Naive thymus-derived CD4-positive, alpha-beta T cell (primary cell): ENCODE measurements at regions of chr10 and their contacts with region 1.

Region 1: DNA sequence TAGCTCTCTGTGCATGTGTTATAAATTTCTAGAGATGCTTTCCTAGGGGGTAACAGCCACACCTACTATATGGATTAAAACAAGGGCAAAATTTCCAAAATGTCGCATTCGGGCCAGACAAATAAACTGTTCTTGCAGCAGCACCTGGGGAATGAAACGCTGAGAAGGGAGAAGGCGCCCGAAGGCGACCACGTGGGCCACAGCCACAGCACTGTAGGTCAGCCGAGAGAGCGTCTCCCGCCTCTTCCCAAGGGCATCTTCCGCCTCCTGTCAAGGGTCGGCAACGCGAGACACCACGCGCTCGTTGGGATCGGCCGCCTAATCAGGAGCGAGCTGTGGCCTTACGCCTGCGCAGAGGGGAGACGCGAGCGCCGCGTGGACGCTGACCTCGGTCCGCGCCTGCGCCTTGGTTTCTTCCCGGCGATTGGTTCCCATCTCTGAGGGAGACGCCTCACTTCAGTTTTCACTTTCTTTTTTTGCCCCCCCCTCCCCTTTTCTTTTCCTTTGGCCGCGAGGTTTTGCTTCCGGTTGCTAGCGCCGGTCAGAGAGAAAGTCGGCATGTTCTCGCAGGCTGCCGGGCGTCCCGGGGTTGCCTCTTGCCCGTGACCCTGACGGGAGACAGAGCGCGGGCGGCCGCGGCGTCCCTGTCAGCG is at the start of gene TASOR2:
- DNase-seq: peak; percentile 91 to 96 (median 93)
- ATAC-seq: peak; percentile 92
- H3K4me3 ChIP-seq: peak within 1 kb of the TSS; percentile 76
- H3K4me3 Mint-ChIP-seq: peak within 1 kb of the TSS; percentile 93 to 100 (median 98)
- H3K27ac ChIP-seq: peak within 1 kb of the TSS; percentile 96
- H3K27ac Mint-ChIP-seq: peak within 1 kb of the TSS; percentile 90 to 99 (median 98)
- H3K4me1 ChIP-seq: peaks cover 15 to 24% of the 10 kb centered on the region in 2 donors
- H3K4me1 Mint-ChIP-seq: peaks cover 31 to 55% (median 44%) of the 10 kb centered on the region in 7 donors
- H3K27me3 ChIP-seq: no peaks in the 10 kb centered on the region
- H3K27me3 Mint-ChIP-seq: peaks cover 0 to 12% (median under 1%) of the 10 kb centered on the region in 5 donors
- total RNA-seq, gene TASOR2: 55.0 to 86.5 (median 62.1) TPM

Region 2: GRCh38 chr10:5446390-5446926 is 238.0 kb before region 1 on chr10:
- CTCF ChIA-PET with region 1: interaction called, 3 read pairs
- POLR2A ChIA-PET with region 1: interaction called, 3 read pairs
- intact Hi-C with region 1: loop called in 1 of 2 experiments (anchors 2 kb)
- DNase-seq: peak; percentile 77 to 88 (median 86)
- ATAC-seq: peak; percentile 93
- H3K4me3 ChIP-seq: peak overlapping the region; percentile 79
- H3K4me3 Mint-ChIP-seq: peak overlapping the region; percentile 92 to 100 (median 96)
- H3K27ac ChIP-seq: peak overlapping the region; percentile 78
- H3K27ac Mint-ChIP-seq: peak overlapping the region; percentile 82 to 97 (median 92)
- H3K4me1 ChIP-seq: peaks cover 0 to 24% of the 10 kb centered on the region in 2 donors
- H3K4me1 Mint-ChIP-seq: peaks cover 16 to 78% (median 62%) of the 10 kb centered on the region in 7 donors
- H3K27me3 ChIP-seq: no peaks in the 10 kb centered on the region
- H3K27me3 Mint-ChIP-seq: no peaks in the 10 kb centered on the region

Region 3: DNA sequence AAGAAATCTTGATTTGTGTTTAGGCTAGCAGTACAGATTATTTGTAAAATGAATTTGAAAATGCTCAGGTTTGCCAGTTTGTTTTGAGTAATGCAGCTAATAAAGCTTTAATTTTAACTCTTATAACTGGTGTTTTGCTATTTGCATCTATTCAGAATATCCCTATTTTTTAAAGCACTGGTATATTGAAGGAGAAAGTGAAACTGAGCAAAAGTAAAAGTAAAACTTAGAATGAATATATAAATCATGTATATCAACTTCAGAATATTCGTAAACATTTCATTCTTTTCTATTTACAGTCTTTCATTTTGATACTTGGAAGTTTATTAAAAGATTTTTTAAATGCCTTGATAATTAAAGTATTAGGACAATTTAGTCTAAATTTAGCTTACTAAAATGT is 26.4 kb after region 1 on chr10:
- CTCF ChIA-PET with region 1: no interaction called
- POLR2A ChIA-PET with region 1: interaction called, 7 read pairs
- intact Hi-C with region 1: loop called (anchors 1 kb)
- DNase-seq: peak in 1 of 9 donors; percentile 7
- ATAC-seq: no peak
- H3K4me3 ChIP-seq: peak overlapping the region; percentile 32
- H3K4me3 Mint-ChIP-seq: peak overlapping the region; percentile 16 to 84 (median 70)
- H3K27ac ChIP-seq: peak overlapping the region; percentile 20
- H3K27ac Mint-ChIP-seq: peak overlapping the region in 4 of 9 donors; percentile 68 to 89 (median 82)
- H3K4me1 ChIP-seq: peaks cover 11 to 20% of the 10 kb centered on the region in 2 donors
- H3K4me1 Mint-ChIP-seq: peaks cover 31 to 91% (median 79%) of the 10 kb centered on the region in 7 donors
- H3K27me3 ChIP-seq: no peaks in the 10 kb centered on the region
- H3K27me3 Mint-ChIP-seq: no peaks in the 10 kb centered on the region

Region 4: DNA sequence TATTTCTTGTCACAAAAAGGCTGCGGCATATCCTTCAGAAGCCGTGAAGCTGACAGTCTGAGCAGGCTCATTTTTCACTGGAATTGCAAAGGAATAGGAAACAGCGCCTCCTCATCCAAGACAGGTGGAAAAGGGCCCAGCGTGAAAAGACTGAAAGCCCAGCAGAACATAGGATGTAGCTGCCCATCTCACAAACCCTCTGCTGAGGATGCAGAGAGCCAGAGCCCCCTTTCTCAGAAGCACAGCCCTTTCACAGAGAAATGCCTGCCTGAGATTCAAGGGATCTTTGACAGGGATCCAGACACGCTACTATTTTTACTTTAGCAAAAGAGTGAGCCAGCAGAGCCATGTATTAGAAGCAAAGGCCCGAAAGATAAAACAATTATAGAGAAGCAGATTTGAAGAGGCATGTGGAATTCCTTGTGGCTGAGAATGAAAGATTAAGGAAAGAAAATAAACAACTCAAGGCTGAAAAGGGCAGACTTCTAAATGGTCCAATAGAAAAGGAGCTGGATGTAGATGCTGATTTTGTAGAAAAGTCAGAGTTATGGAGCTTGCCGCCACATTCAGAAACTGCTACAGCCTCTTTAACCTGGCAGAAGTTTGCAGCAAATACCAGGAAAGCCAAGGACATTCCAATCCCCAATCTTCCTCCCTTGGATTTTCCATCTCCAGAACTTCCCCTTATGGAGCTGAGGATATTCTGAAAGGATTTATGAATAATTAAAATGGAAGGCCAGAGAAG is 91.9 kb after region 1 on chr10:
- CTCF ChIA-PET with region 1: no interaction called
- POLR2A ChIA-PET with region 1: no interaction called
- intact Hi-C with region 1: loop called (anchors 1 to 2 kb)
- DNase-seq: no peak
- ATAC-seq: peak; percentile 5
- H3K4me3 ChIP-seq: peak overlapping the region; percentile 32
- H3K4me3 Mint-ChIP-seq: peak overlapping the region; percentile 59 to 82 (median 76)
- H3K27ac ChIP-seq: peak overlapping the region; percentile 72
- H3K27ac Mint-ChIP-seq: peak overlapping the region; percentile 83 to 95 (median 94)
- H3K4me1 ChIP-seq: peaks cover 15 to 24% of the 10 kb centered on the region in 2 donors
- H3K4me1 Mint-ChIP-seq: peaks cover 23 to 75% (median 62%) of the 10 kb centered on the region in 7 donors
- H3K27me3 ChIP-seq: no peaks in the 10 kb centered on the region
- H3K27me3 Mint-ChIP-seq: no peaks in the 10 kb centered on the region

Region 5: DNA sequence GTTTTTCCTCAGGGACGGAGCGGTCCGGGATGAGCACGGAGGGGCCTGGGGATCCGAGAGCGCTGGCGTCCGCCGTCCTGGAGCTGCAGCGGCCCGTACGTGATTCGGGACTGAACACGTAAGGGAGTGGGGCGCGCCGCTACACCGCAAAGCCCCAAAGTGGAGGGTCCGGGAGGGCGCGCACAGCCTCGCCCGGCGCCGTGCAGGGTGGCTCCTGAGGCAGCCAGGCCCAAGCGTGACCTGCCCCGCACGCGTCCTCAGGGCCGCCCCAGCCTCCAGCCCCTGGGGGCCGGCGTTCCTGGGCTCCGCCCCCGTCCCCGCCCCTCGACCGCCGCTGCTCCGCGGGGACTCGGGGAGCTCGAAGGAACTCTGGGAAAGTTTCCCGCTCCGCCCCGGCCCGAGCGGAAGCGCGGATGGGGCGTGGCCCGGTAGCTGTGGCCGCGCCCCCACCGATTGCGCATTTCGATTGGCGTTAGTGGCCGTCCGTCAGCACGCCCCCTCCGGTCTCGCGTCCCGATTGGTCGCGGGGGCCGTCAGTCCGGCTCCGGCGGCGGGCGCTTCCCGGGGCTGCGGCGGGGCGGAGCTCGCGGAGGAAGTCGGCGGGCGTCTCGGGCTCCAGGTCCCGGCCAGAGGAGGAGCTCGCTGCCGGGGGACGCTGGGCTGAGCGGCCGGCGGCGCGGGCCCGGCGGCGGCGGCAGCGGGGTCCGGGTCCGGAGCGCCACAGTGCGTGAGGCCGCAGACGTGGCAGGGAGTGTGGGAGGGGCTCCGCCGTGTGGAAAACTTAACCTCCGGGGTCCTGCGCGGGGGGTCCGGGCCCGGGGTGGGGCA is 205.4 kb after region 1 on chr10 and contains the starts of genes ANKRD16 and FBH1:
- CTCF ChIA-PET with region 1: interaction called, 3 read pairs
- POLR2A ChIA-PET with region 1: interaction called, 6 read pairs
- intact Hi-C with region 1: loop called (anchors 1 to 2 kb)
- DNase-seq: peak; percentile 94 to 100 (median 96)
- ATAC-seq: peak; percentile 96
- H3K4me3 ChIP-seq: peak within 1 kb of the TSS; percentile 70
- H3K4me3 Mint-ChIP-seq: peak within 1 kb of the TSS; percentile 90 to 97 (median 94)
- H3K27ac ChIP-seq: peak within 1 kb of the TSS; percentile 81
- H3K27ac Mint-ChIP-seq: peak within 1 kb of the TSS; percentile 80 to 94 (median 87)
- H3K4me1 ChIP-seq: peaks cover 12% of the 10 kb centered on the region in 2 donors
- H3K4me1 Mint-ChIP-seq: peaks cover 34 to 64% (median 60%) of the 10 kb centered on the region in 7 donors
- H3K27me3 ChIP-seq: no peaks in the 10 kb centered on the region
- H3K27me3 Mint-ChIP-seq: no peaks in the 10 kb centered on the region
- total RNA-seq, gene ANKRD16: 4.6 to 9.8 (median 7.2) TPM
- total RNA-seq, gene FBH1: 64.8 to 105 (median 78.6) TPM

Region 6: GRCh38 chr10:7337431-7338171 is 1653.2 kb after region 1 on chr10:
- CTCF ChIA-PET with region 1: no interaction called
- POLR2A ChIA-PET with region 1: no interaction called
- intact Hi-C with region 1: no loop called
- DNase-seq: no peak
- ATAC-seq: peak; percentile 45
- H3K4me3 ChIP-seq: no peak overlapping the region
- H3K4me3 Mint-ChIP-seq: peak overlapping the region in 2 of 10 donors; percentile 10 to 33
- H3K27ac ChIP-seq: no peak overlapping the region
- H3K27ac Mint-ChIP-seq: peak overlapping the region in 4 of 9 donors; percentile 20 to 73 (median 46)
- H3K4me1 ChIP-seq: no peaks in the 10 kb centered on the region
- H3K4me1 Mint-ChIP-seq: peaks cover 32 to 89% (median 76%) of the 10 kb centered on the region in 7 donors
- H3K27me3 ChIP-seq: no peaks in the 10 kb centered on the region
- H3K27me3 Mint-ChIP-seq: no peaks in the 10 kb centered on the region